HEK293 (cell line): ENCODE measurements at regions of chr3 and their contacts with region 1.

Region 1: GRCh38 chr3:142828703-142829305 is 60.1 kb downstream of the PCOLCE2 start:
- H3K4me3 ChIP-seq: no peak overlapping the region
- H3K27ac ChIP-seq: no peak overlapping the region
- H3K4me1 ChIP-seq: no peaks in the 10 kb centered on the region
- CTCF ChIP-seq: peak; percentile 66

Region 2: DNA sequence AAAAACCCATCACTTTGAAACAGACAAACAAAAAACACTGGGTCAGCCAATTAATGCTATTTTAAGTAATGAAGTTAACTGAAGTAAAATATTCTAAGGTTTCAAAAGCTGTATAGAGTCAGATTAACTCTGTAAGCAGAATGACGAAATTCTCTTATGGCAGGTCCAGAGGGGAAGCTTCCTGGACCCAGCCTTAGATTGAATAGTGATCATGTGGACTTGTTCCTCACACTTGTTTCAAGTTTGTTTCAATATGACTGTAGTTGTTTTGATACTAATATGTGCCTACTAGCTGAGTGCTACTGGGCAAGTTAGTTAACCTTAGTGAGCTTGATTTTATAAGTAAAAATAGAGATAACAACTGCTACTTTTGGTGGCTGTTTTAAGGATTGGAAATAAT is 200.0 kb before region 1 on chr3:
- CTCF ChIA-PET with region 1: no interaction called
- POLR2A ChIA-PET with region 1: no interaction called
- H3K4me3 ChIP-seq: no peak overlapping the region
- H3K27ac ChIP-seq: no peak overlapping the region
- H3K4me1 ChIP-seq: peaks cover 8% of the 10 kb centered on the region; the same call in 1 of the 2 replicates
- CTCF ChIP-seq: no peak

Region 3: DNA sequence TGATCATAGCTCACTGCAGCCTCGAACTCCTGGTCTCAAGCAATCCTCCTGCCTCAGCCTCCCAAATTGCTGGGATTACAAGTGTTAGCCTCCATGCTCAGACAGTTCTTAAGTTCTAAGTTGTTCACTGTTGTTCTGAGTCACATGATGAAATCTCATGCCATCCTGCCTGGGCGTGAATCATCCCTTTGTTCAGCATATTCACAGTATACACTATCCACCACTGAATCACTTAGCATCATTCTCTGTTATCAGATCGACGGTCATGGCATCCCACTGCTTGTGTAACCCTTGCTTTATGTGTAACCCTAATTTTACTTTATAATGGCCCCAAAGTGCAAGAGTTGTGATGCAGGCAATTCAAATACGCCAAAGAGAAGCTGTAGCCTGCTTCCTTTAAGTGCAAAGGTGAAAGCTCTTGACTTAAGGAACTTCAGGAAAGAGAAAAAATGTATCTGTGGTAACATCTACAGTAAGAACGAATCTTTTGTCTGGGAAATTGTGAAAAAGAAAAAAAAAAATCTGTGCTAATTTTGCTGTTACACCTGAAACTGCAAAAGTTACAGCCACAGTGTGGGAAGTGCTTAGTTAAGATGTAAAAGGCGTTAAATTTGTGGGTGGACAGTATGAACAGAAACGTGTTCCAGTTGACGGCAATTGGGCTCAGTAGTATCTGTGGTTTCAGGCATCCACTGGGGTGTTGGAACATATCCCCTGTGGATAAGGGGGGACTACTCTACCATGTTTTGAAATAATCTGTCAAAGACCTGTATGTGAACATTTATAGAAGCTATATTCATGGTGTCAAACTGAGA is 20.5 kb before region 1 on chr3:
- CTCF ChIA-PET with region 1: interaction called, 14 read pairs
- POLR2A ChIA-PET with region 1: no interaction called
- H3K4me3 ChIP-seq: no peak overlapping the region
- H3K27ac ChIP-seq: no peak overlapping the region
- H3K4me1 ChIP-seq: no peaks in the 10 kb centered on the region
- CTCF ChIP-seq: no peak

Region 4: GRCh38 chr3:142844339-142844977 is 15.7 kb after region 1 on chr3:
- CTCF ChIA-PET with region 1: interaction called, 22 read pairs
- POLR2A ChIA-PET with region 1: no interaction called
- H3K4me3 ChIP-seq: no peak overlapping the region
- H3K27ac ChIP-seq: no peak overlapping the region
- H3K4me1 ChIP-seq: no peaks in the 10 kb centered on the region
- CTCF ChIP-seq: no peak

Region 5: DNA sequence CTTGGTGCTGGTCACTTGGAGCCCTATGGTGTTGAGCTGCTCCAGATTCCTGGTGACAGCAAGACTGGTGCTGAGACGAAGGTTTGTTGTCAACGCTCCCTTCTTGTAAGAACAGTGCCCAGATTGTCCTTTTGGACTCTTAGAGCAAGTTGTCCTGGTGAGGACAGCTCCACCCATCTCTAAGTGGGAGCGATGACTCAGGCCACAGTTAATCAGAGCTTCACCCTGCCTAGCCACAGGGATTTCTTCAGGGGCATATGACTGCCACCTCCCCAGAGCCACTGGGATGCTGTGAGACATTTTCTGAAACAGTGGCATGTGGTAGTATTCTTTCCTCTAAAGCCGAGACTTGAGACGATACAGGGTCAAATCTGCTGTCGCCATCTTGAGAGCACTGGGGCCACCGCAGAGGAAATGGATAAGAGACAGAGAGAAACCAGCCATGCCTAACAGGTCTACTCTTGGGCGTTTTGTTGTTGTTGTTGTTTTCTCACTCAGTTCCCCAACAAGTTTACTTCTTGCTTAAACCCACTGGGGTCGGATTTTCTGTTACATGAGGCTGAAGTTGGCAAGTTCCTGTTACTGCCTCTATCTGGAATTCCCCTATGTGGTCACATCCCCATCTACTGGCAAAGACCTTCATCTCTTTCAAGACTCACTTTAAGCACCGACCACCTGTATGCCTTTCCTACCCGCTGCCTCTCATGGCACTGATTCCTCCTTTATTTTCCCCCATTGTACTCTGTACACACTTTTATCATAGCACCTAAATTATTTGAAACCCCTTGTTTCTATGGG is 76.0 kb after region 1 on chr3:
- CTCF ChIA-PET with region 1: interaction called, 17 read pairs
- POLR2A ChIA-PET with region 1: no interaction called
- H3K4me3 ChIP-seq: no peak overlapping the region
- H3K27ac ChIP-seq: no peak overlapping the region
- H3K4me1 ChIP-seq: no peaks in the 10 kb centered on the region
- CTCF ChIP-seq: peak; percentile 48

Region 6: DNA sequence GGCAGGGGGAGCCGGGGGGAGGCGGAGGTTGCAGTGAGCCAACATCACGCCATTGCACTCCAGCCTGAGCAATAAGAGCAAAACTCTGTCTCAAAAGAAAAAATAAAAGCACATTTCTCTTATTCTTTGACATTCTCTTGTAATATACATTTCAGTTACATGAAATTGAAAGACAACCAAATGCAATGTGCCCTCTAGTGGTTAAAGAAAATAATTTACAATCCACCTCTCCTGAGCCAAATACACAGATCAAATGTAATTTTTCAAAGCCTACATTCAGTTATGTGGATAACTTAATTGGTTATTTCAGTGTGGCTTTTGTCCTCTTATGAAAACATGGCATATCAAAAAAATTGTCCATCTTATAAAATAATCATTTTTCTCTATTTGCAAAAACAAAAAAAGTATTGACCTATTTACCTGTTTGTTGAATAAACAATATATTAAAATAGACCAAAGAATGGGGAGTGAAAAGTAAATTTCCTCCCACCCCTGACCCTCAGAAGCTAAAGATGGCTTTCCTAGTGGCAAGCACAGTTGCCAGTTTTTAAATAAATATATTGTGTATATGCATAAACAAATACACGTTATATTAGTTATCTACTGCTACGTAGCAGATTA is 158.4 kb after region 1 on chr3:
- CTCF ChIA-PET with region 1: interaction called, 33 read pairs
- POLR2A ChIA-PET with region 1: no interaction called
- H3K4me3 ChIP-seq: no peak overlapping the region
- H3K27ac ChIP-seq: no peak overlapping the region
- H3K4me1 ChIP-seq: no peaks in the 10 kb centered on the region
- CTCF ChIP-seq: no peak

Region 7: GRCh38 chr3:143252931-143253330 is 424.1 kb after region 1 on chr3:
- CTCF ChIA-PET with region 1: no interaction called
- POLR2A ChIA-PET with region 1: no interaction called
- H3K4me3 ChIP-seq: no peak overlapping the region
- H3K27ac ChIP-seq: no peak overlapping the region
- H3K4me1 ChIP-seq: no peaks in the 10 kb centered on the region
- CTCF ChIP-seq: no peak